ENCODE measurements at regions of chrX and their contacts with region 1.

Region 1: GRCh38 chrX:19904778-19905367 is 17.5 kb upstream of the SH3KBP1 start:
- DNase-seq: peak; percentile 22 to 72
- H3K4me3 ChIP-seq: no peak overlapping the region
- H3K27ac ChIP-seq: no peak overlapping the region
- H3K4me1 ChIP-seq: peaks cover 8% of the 10 kb centered on the region
- H3K27me3 ChIP-seq: no peaks in the 10 kb centered on the region
- CTCF ChIP-seq: peak; percentile 73

Region 2: GRCh38 chrX:19611636-19612376 is 293.1 kb before region 1 on chrX:
- CTCF ChIA-PET with region 1: no interaction called
- POLR2A ChIA-PET with region 1: interaction called, 17 read pairs
- intact Hi-C with region 1: no loop called
- DNase-seq: no peak
- H3K4me3 ChIP-seq: no peak overlapping the region
- H3K27ac ChIP-seq: no peak overlapping the region
- H3K4me1 ChIP-seq: no peaks in the 10 kb centered on the region
- H3K27me3 ChIP-seq: no peaks in the 10 kb centered on the region
- CTCF ChIP-seq: no peak

Region 3: GRCh38 chrX:20066968-20067708 is 162.3 kb after region 1 on chrX:
- CTCF ChIA-PET with region 1: interaction called, 8 read pairs
- POLR2A ChIA-PET with region 1: interaction called, 15 read pairs
- intact Hi-C with region 1: loop called (anchors 1 kb)
- DNase-seq: peak; percentile 21 to 55
- H3K4me3 ChIP-seq: peak overlapping the region; percentile 29; the same call in 1 of the 2 replicates
- H3K27ac ChIP-seq: peak overlapping the region; percentile 49
- H3K4me1 ChIP-seq: peaks cover 22% of the 10 kb centered on the region
- H3K27me3 ChIP-seq: no peaks in the 10 kb centered on the region
- CTCF ChIP-seq: peak; percentile 76

Region 4: GRCh38 chrX:20141281-20142220 is 236.7 kb after region 1 on chrX and contains the start of gene EIF1AX:
- CTCF ChIA-PET with region 1: no interaction called
- POLR2A ChIA-PET with region 1: no interaction called
- intact Hi-C with region 1: loop called (anchors 5 kb)
- DNase-seq: peak; percentile 90 to 96
- H3K4me3 ChIP-seq: peak within 1 kb of the TSS; percentile 95
- H3K27ac ChIP-seq: peak within 1 kb of the TSS; percentile 61
- H3K4me1 ChIP-seq: peaks cover 13% of the 10 kb centered on the region
- H3K27me3 ChIP-seq: no peaks in the 10 kb centered on the region
- CTCF ChIP-seq: no peak
- total RNA-seq, gene EIF1AX: 77.3 TPM in 2 replicates

Measured in PC-9 (cell line).